Activated CD4-positive, alpha-beta memory T cell treated with anti-CD3 and anti-CD28 coated beads, Interleukin-2, amount 10 ng/mL, durations not matched to agents 7 days and 5 days (primary cell): ENCODE measurements at regions of chr7 and their contacts with region 1.

Region 1: GRCh38 chr7:149090397-149091195 is at the start of gene ZNF786:
- DNase-seq: peak; percentile 90
- H3K4me3 Mint-ChIP-seq: peak within 1 kb of the TSS; percentile 97
- H3K27ac Mint-ChIP-seq: peak within 1 kb of the TSS; percentile 98
- H3K4me1 Mint-ChIP-seq: peaks cover 20% of the 10 kb centered on the region
- H3K27me3 Mint-ChIP-seq: no peaks in the 10 kb centered on the region
- total RNA-seq, gene ZNF786: 6.0 to 7.0 TPM

Region 2: GRCh38 chr7:149071641-149072437 is 18.8 kb before region 1 on chr7:
- CTCF ChIA-PET with region 1: interaction called, 30 read pairs
- POLR2A ChIA-PET with region 1: no interaction called
- DNase-seq: peak; percentile 53
- H3K4me3 Mint-ChIP-seq: no peak overlapping the region
- H3K27ac Mint-ChIP-seq: no peak overlapping the region
- H3K4me1 Mint-ChIP-seq: peaks cover 8% of the 10 kb centered on the region
- H3K27me3 Mint-ChIP-seq: no peaks in the 10 kb centered on the region